GM12878 (cell line): ENCODE measurements at regions of chr2 and their contacts with region 1.

Region 1: DNA sequence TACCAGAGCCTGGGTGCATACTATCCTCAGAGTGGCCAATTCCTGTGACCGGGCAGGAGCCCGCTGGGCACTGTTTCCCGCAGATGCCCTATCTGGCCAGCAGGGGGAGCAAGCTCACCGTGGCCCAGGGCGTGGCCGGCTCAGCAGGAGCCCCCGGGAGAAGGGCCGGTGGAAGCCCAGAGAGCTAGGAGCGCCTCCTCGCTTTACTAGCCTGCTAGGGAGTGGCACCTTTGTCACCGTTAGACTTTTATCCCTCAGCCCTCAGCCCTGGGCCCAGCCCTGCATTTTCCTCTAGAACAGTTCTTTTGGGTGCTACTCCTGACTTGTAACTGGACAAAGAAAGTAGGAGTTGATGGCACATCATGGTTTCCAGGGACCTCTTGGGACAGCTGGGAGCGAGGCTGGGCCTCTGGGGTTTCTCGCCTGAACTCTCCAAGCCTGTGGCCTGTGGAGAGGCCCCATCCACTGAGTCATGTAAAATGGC is 24.0 kb downstream of the TMEM177 start:
- DNase-seq: no peak
- ATAC-seq: peak; percentile 97
- H3K4me3 ChIP-seq: no peak overlapping the region
- H3K27ac ChIP-seq: no peak overlapping the region
- H3K4me1 ChIP-seq: peaks cover 14% of the 10 kb centered on the region
- H3K27me3 ChIP-seq: no peaks in the 10 kb centered on the region; a peak in 1 of 4 replicates
- CTCF ChIP-seq: peak; percentile 96 to 99 (median 98)
- EP300 ChIP-seq: no peak
- POLR2A ChIP-seq: no peak
- RAD21 ChIP-seq: peak; percentile 88

Region 2: GRCh38 chr2:119753041-119753929 is 50.3 kb after region 1 on chr2:
- CTCF ChIA-PET with region 1: interaction called, 5 read pairs
- POLR2A ChIA-PET with region 1: no interaction called
- RAD21 ChIA-PET with region 1: interaction called, 3 read pairs
- SMC1A ChIA-PET with region 1: interaction called, 3 read pairs
- in situ Hi-C with region 1: no loop called
- intact Hi-C with region 1: loop called (anchors 2 kb)
- DNase-seq: no peak
- ATAC-seq: peak; percentile 91
- H3K4me3 ChIP-seq: no peak overlapping the region
- H3K27ac ChIP-seq: no peak overlapping the region
- H3K4me1 ChIP-seq: no peaks in the 10 kb centered on the region
- H3K27me3 ChIP-seq: peaks cover 0 to 5% of the 10 kb centered on the region in 2 experiments; a peak in 1 of 4 replicates
- CTCF ChIP-seq: peak; percentile 68 to 81 (median 73)
- EP300 ChIP-seq: no peak
- POLR2A ChIP-seq: no peak
- RAD21 ChIP-seq: peak; percentile 92